CD14-positive monocyte (primary cell): ENCODE measurements at regions of chr9 and their contacts with region 1.

Region 1: DNA sequence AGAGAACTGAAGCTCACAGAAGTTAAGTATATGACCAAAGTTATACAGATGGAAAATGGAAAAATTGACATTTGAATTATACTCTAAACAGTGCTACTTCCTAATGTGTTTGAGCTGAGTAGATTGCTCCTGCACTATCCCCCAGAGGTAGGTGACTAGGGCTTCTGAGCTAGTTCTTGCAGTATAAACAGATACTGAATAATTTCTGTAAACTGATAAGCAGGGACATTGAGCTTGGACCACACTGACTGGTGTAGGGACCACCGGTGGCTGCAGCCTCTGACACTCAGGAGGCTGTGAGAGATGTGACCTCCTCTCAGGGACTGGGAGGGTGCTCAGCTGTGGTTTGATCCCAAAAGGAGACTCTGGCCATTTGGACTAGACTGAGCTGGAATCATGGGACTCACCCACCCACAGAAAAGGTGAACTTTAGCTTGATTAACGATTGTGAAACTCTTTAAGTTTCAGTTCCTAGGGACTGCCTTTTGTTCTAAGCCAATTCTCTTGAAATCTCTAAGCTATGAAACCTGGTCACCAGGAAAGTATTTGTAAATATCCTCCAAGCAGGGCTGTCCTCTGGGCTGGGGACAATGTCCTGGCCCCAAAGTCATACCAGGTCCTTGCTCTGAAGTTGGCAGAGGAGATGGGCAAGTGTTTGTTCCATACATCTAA is 291.5 kb downstream of the SEC61B start:
- DNase-seq: peak in 2 of 3 donors; percentile 32 to 36
- H3K4me3 ChIP-seq: no peak overlapping the region
- H3K4me3 Mint-ChIP-seq: no peak overlapping the region
- H3K27ac ChIP-seq: no peak overlapping the region
- H3K27ac Mint-ChIP-seq: peak overlapping the region in 5 of 7 donors; percentile 1 to 78 (median 44)
- H3K4me1 ChIP-seq: peaks cover 20 to 22% of the 10 kb centered on the region in 2 donors
- H3K4me1 Mint-ChIP-seq: peaks cover 25% of the 10 kb centered on the region
- H3K27me3 ChIP-seq: no peaks in the 10 kb centered on the region
- H3K27me3 Mint-ChIP-seq: no peaks in the 10 kb centered on the region
- CTCF ChIP-seq: no peak

Region 2: GRCh38 chr9:99433555-99433954 is 80.0 kb before region 1 on chr9:
- intact Hi-C with region 1: loop called in 1 of 2 experiments (anchors 5 kb)
- DNase-seq: peak; percentile 93 to 98 (median 93)
- H3K4me3 ChIP-seq: no peak overlapping the region
- H3K4me3 Mint-ChIP-seq: no peak overlapping the region
- H3K27ac ChIP-seq: peak overlapping the region in 1 of 2 donors; percentile 67
- H3K27ac Mint-ChIP-seq: peak overlapping the region; percentile 47 to 92 (median 81)
- H3K4me1 ChIP-seq: peaks cover 13% of the 10 kb centered on the region in 2 donors
- H3K4me1 Mint-ChIP-seq: peaks cover 18% of the 10 kb centered on the region
- H3K27me3 ChIP-seq: no peaks in the 10 kb centered on the region
- H3K27me3 Mint-ChIP-seq: peaks cover 0 to 2% (median 0%) of the 10 kb centered on the region in 3 donors
- CTCF ChIP-seq: no peak

Region 3: GRCh38 chr9:99565203-99565602 is 51.6 kb after region 1 on chr9:
- intact Hi-C with region 1: no loop called
- DNase-seq: no peak
- H3K4me3 ChIP-seq: no peak overlapping the region
- H3K4me3 Mint-ChIP-seq: no peak overlapping the region
- H3K27ac ChIP-seq: no peak overlapping the region
- H3K27ac Mint-ChIP-seq: no peak overlapping the region
- H3K4me1 ChIP-seq: no peaks in the 10 kb centered on the region
- H3K4me1 Mint-ChIP-seq: peaks cover 4% of the 10 kb centered on the region
- H3K27me3 ChIP-seq: no peaks in the 10 kb centered on the region
- H3K27me3 Mint-ChIP-seq: peaks cover 1 to 5% (median 2%) of the 10 kb centered on the region in 3 donors
- CTCF ChIP-seq: no peak

Region 4: GRCh38 chr9:99595796-99596195 is 82.2 kb after region 1 on chr9:
- intact Hi-C with region 1: loop called in 1 of 2 experiments (anchors 5 kb)
- DNase-seq: peak; percentile 90 to 96 (median 92)
- H3K4me3 ChIP-seq: no peak overlapping the region
- H3K4me3 Mint-ChIP-seq: peak overlapping the region in 1 of 2 donors; percentile 33
- H3K27ac ChIP-seq: peak overlapping the region in 1 of 2 donors; percentile 80
- H3K27ac Mint-ChIP-seq: peak overlapping the region; percentile 87 to 97 (median 92)
- H3K4me1 ChIP-seq: peaks cover 36 to 42% of the 10 kb centered on the region in 2 donors
- H3K4me1 Mint-ChIP-seq: peaks cover 41% of the 10 kb centered on the region
- H3K27me3 ChIP-seq: no peaks in the 10 kb centered on the region
- H3K27me3 Mint-ChIP-seq: peaks cover 0 to 5% (median 2%) of the 10 kb centered on the region in 3 donors
- CTCF ChIP-seq: no peak

Region 5: DNA sequence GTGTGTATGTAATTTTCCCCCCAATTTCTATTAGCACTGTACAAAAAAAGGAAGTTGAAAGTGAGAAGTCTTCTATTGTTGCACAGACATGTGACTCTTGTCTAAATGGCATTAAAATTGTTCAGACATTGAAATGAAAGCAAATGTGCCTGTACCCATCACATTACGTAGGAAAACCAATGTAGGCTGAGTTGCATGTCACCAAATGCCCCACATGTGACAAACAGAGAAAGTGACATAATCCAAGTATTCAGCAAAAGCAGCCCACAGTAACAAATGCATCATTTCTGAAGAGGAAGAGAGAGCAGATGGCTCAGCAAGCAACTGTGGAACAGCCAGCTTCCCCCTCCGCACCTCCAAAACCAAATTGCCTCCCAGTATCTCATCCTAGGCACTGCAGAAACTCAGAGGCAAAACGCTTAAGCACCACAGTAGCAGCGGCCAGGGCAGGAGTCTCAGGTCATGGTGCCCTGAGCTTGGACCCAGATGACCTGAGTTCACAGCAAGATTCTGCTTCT is 146.7 kb after region 1 on chr9:
- intact Hi-C with region 1: loop called in 1 of 2 experiments (anchors 10 kb)
- DNase-seq: peak; percentile 89 to 96 (median 89)
- H3K4me3 ChIP-seq: peak overlapping the region in 1 of 3 experiments; percentile 58
- H3K4me3 Mint-ChIP-seq: peak overlapping the region; percentile 25 to 64
- H3K27ac ChIP-seq: peak overlapping the region; percentile 57 to 71
- H3K27ac Mint-ChIP-seq: peak overlapping the region; percentile 79 to 93 (median 84)
- H3K4me1 ChIP-seq: peaks cover 7 to 17% of the 10 kb centered on the region in 2 donors
- H3K4me1 Mint-ChIP-seq: peaks cover 9% of the 10 kb centered on the region
- H3K27me3 ChIP-seq: no peaks in the 10 kb centered on the region
- H3K27me3 Mint-ChIP-seq: peaks cover 0 to 4% (median 1%) of the 10 kb centered on the region in 3 donors
- CTCF ChIP-seq: no peak

Region 6: DNA sequence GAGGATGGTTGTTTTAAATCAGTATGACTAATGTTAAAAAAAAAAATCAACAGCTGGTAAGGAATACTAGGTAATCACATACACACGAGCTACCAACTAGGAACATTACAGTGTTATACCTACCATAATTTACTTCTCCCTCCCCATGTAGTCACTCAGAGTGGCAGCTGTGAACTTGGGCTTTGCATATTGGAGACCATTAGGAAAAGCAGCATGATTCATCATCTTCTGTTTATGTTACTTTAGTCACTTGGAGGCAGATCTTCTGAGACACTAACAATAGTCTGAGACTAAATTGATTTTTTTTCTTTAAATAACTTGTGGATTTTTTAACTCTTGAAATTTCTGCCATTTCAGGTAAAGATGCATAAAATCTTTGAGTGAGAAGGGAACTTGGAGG is 166.6 kb after region 1 on chr9:
- intact Hi-C with region 1: no loop called
- DNase-seq: peak in 1 of 3 donors; percentile 7
- H3K4me3 ChIP-seq: no peak overlapping the region
- H3K4me3 Mint-ChIP-seq: no peak overlapping the region
- H3K27ac ChIP-seq: no peak overlapping the region
- H3K27ac Mint-ChIP-seq: no peak overlapping the region
- H3K4me1 ChIP-seq: no peaks in the 10 kb centered on the region
- H3K4me1 Mint-ChIP-seq: peaks cover 9% of the 10 kb centered on the region
- H3K27me3 ChIP-seq: no peaks in the 10 kb centered on the region
- H3K27me3 Mint-ChIP-seq: peaks cover 0 to 2% (median under 1%) of the 10 kb centered on the region in 3 donors
- CTCF ChIP-seq: no peak